ENCODE measurements at regions of chr6 and their contacts with region 1.

Region 1: DNA sequence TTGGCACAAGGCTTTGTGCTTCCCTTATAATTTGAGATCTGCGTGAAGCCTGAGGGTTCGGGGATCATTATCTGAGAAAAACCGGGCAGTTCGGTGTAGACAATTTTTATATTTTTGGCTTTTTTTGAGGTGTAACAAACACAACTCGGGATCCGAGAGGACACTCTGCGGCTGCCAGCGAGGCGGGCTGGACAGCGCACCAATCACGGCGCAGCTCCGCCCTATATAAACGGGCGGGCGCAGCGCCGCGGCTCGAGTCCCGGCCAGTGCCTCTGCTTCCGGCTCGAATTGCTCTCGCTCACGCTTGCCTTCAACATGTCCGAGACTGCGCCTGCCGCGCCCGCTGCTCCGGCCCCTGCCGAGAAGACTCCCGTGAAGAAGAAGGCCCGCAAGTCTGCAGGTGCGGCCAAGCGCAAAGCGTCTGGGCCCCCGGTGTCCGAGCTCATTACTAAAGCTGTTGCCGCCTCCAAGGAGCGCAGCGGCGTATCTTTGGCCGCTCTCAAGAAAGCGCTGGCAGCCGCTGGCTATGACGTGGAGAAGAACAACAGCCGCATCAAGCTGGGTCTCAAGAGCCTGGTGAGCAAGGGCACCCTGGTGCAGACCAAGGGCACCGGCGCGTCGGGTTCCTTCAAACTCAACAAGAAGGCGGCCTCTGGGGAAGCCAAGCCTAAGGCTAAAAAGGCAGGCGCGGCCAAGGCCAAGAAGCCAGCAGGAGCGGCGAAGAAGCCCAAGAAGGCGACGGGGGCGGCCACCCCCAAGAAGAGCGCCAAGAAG is 69.0 kb downstream of the HFE start:
- DNase-seq: peak; percentile 74 to 91 (median 83)
- ATAC-seq: peak; percentile 41 to 65 (median 63)
- H3K4me3 ChIP-seq: peak overlapping the region; percentile 73 to 87
- H3K4me3 Mint-ChIP-seq: peak overlapping the region; percentile 91 to 98 (median 97)
- H3K27ac ChIP-seq: peak overlapping the region; percentile 90
- H3K27ac Mint-ChIP-seq: peak overlapping the region; percentile 94 to 98
- H3K4me1 ChIP-seq: peaks cover 15 to 31% of the 10 kb centered on the region in 2 experiments
- H3K4me1 Mint-ChIP-seq: peaks cover 28 to 60% (median 40%) of the 10 kb centered on the region in 3 donors
- H3K27me3 ChIP-seq: no peaks in the 10 kb centered on the region
- H3K27me3 Mint-ChIP-seq: no peaks in the 10 kb centered on the region

Region 2: DNA sequence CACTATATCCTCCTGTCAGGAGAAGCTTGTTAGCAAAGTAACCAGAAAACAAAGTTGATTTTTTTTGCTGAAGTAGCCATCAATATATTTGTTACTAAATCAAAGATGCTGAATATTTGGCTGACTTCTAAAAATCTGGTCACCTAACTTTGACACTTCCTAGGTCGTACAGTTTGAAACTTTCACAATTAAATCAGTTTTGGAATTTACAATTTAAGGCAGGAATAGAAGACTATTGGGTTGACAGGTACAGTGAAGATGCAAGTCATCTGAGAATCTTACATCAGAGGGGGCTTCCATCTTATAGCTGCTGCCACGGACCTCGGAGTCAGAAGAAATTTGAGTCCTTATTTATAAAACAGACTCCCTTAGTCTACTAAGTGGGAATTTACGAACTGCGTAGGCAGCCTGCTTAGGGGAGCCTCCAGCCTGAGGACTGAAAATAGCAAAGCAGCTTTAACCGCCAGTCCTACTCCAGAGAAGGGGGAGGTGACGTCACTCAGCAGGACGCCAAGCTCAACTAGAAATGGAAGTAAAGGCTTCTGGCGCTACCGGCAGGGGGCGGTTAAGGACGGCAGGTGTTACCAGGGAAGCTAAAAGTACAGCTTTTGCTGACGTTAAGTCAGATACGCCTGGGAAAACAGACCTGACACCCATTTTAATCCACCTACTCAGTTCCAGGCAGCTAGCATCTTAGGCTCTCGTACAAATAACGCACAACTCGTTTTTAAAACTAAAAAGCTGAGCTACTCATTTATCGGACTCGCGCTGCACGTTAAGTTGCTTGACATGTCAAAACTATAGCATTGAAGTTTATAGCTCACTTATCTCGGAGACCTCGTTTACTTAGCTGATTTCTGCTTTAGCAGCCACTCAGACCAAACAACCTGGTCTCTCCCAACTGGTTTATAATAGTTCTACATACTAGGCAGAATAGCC is 130.1 kb before region 1 on chr6:
- CTCF ChIA-PET with region 1: no interaction called
- POLR2A ChIA-PET with region 1: interaction called in 1 of 2 experiments, 23 read pairs
- DNase-seq: peak; percentile 70 to 98 (median 96)
- ATAC-seq: peak; percentile 33 to 46 (median 36)
- H3K4me3 ChIP-seq: peak overlapping the region; percentile 63 to 88
- H3K4me3 Mint-ChIP-seq: peak overlapping the region; percentile 82 to 93 (median 92)
- H3K27ac ChIP-seq: peak overlapping the region; percentile 93
- H3K27ac Mint-ChIP-seq: peak overlapping the region; percentile 93 to 99
- H3K4me1 ChIP-seq: peaks cover 22 to 24% of the 10 kb centered on the region in 2 experiments
- H3K4me1 Mint-ChIP-seq: peaks cover 43 to 53% (median 44%) of the 10 kb centered on the region in 3 donors
- H3K27me3 ChIP-seq: no peaks in the 10 kb centered on the region
- H3K27me3 Mint-ChIP-seq: peaks cover 0 to 2% of the 10 kb centered on the region in 2 donors

Region 3: DNA sequence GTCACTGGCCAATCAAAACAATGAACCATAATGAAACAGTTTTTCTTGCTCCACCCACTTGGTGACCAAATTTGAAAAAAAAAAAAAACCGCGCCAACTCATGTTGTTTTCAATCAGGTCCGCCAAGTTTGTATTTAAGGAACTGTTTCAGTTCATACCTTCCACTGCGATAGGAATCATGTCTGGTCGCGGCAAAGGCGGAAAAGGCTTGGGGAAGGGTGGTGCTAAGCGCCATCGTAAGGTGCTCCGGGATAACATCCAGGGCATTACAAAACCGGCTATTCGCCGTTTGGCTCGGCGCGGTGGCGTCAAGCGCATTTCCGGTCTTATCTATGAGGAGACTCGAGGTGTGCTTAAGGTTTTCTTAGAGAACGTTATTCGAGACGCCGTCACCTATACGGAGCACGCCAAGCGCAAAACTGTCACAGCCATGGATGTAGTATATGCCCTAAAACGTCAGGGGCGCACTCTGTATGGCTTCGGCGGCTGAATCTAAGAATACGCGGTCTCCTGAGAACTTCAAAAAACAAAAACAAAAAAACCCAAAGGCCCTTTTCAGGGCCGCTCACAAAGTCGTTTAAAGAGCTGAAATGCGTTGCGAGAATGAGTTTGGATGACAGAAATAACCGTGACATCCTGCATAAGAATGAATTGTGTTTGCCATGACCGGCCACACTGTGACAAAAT is 52.4 kb before region 1 on chr6:
- CTCF ChIA-PET with region 1: interaction called in 1 of 2 experiments, 3 read pairs
- POLR2A ChIA-PET with region 1: interaction called, 10 to 45 read pairs
- DNase-seq: peak; percentile 82 to 95 (median 89)
- ATAC-seq: peak; percentile 87 to 92 (median 90)
- H3K4me3 ChIP-seq: peak overlapping the region; percentile 40 to 68
- H3K4me3 Mint-ChIP-seq: peak overlapping the region; percentile 78 to 91 (median 89)
- H3K27ac ChIP-seq: peak overlapping the region; percentile 85
- H3K27ac Mint-ChIP-seq: peak overlapping the region; percentile 96 to 99
- H3K4me1 ChIP-seq: peaks cover 7 to 12% of the 10 kb centered on the region in 2 experiments
- H3K4me1 Mint-ChIP-seq: peaks cover 15 to 18% (median 16%) of the 10 kb centered on the region in 3 donors
- H3K27me3 ChIP-seq: peaks cover 0 to 4% of the 10 kb centered on the region in 2 experiments
- H3K27me3 Mint-ChIP-seq: peaks cover 0 to 3% of the 10 kb centered on the region in 2 donors

Region 4: DNA sequence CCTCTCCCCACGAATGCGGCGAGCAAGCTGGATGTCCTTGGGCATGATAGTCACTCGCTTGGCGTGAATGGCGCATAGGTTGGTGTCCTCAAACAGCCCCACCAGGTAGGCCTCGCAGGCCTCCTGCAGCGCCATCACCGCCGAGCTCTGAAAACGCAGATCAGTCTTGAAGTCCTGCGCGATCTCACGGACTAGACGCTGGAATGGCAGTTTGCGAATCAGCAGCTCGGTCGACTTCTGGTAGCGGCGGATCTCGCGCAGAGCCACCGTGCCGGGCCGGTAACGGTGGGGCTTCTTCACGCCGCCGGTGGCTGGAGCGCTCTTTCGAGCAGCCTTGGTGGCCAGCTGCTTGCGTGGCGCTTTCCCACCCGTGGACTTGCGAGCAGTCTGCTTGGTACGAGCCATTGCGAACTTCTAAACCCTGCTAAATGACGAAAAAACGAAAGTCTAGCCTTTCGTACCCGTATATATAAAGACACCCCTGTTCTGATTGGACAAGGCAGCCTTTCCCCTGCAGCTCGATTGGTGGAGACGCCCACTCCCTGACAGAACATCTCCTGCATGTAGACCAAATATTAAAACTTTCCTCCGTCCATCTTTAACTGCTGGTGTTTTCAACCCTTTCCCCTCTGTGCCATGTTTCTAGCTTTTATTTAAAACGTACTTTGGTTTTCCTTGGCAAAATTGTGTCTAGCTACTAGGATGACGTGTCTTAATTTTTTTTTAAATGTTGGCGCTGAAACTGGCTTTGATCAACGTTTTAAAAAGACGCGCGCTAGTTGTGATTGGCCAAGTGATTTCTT is 40.8 kb after region 1 on chr6:
- CTCF ChIA-PET with region 1: interaction called, 4 to 27 read pairs
- POLR2A ChIA-PET with region 1: interaction called, 92 to 311 read pairs
- DNase-seq: peak; percentile 55 to 93 (median 81)
- ATAC-seq: peak; percentile 58 to 66 (median 61)
- H3K4me3 ChIP-seq: peak overlapping the region; percentile 79 to 99
- H3K4me3 Mint-ChIP-seq: peak overlapping the region; percentile 95 to 98 (median 97)
- H3K27ac ChIP-seq: peak overlapping the region; percentile 85
- H3K27ac Mint-ChIP-seq: peak overlapping the region; percentile 93 to 98
- H3K4me1 ChIP-seq: peaks cover 13 to 30% of the 10 kb centered on the region in 2 experiments
- H3K4me1 Mint-ChIP-seq: peaks cover 38 to 60% (median 46%) of the 10 kb centered on the region in 3 donors
- H3K27me3 ChIP-seq: no peaks in the 10 kb centered on the region
- H3K27me3 Mint-ChIP-seq: no peaks in the 10 kb centered on the region

Region 5: DNA sequence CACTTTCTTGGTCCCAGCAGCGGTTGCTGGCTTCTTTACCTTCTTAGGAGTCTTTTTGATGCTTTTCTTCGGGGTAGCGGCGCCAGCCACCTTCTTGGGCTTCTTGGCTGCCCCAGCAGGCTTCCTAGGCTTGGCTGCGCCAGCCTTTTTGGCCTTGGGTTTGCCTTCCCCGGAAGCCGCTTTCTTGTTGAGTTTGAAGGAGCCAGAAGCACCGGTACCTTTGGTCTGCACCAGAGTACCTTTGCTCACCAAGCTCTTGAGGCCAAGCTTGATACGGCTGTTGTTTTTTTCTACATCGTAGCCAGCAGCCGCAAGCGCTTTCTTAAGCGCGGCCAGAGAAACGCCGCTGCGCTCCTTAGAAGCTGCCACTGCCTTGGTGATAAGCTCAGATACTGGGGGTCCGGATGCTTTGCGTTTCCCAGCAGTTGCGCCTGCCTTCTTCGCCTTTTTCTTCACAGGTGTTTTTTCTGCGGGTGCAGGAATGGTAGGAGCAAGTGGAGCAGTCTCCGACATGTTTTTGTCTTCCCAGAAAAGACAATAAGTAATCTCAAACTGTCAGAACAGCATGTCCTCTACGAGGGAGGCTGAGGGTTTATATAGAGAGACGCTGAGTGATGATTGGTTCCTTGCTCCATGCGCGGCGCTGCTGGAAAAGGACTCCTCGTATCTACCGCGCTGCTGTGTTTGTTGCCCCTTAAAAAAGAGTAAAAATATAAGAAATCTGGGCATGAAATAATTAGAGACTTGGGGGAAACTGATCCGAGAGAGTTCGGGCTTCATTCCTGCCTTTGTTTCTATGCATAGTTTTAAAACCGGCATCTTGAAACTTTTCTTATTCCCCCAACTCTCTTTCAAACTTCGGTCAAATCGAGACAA is 78.4 kb after region 1 on chr6:
- CTCF ChIA-PET with region 1: no interaction called
- POLR2A ChIA-PET with region 1: interaction called, 9 to 25 read pairs
- DNase-seq: peak; percentile 52 to 83 (median 66)
- ATAC-seq: peak; percentile 66 to 78 (median 76)
- H3K4me3 ChIP-seq: peak overlapping the region; percentile 88 to 98
- H3K4me3 Mint-ChIP-seq: peak overlapping the region; percentile 87 to 96 (median 88)
- H3K27ac ChIP-seq: peak overlapping the region; percentile 95
- H3K27ac Mint-ChIP-seq: peak overlapping the region; percentile 96 to 100
- H3K4me1 ChIP-seq: peaks cover 13 to 19% of the 10 kb centered on the region in 2 experiments
- H3K4me1 Mint-ChIP-seq: peaks cover 32 to 39% (median 36%) of the 10 kb centered on the region in 3 donors
- H3K27me3 ChIP-seq: no peaks in the 10 kb centered on the region
- H3K27me3 Mint-ChIP-seq: no peaks in the 10 kb centered on the region

Region 6: GRCh38 chr6:27132532-27133280 is 976.4 kb after region 1 on chr6:
- CTCF ChIA-PET with region 1: no interaction called
- POLR2A ChIA-PET with region 1: interaction called in 1 of 2 experiments, 17 read pairs
- DNase-seq: peak; percentile 76 to 98 (median 87)
- ATAC-seq: peak; percentile 80 to 87 (median 86)
- H3K4me3 ChIP-seq: peak overlapping the region; percentile 49 to 77
- H3K4me3 Mint-ChIP-seq: no peak overlapping the region
- H3K27ac ChIP-seq: peak overlapping the region; percentile 85
- H3K27ac Mint-ChIP-seq: no peak overlapping the region
- H3K4me1 ChIP-seq: peaks cover 17 to 34% of the 10 kb centered on the region in 2 experiments
- H3K4me1 Mint-ChIP-seq: peaks cover 22 to 30% (median 22%) of the 10 kb centered on the region in 3 donors
- H3K27me3 ChIP-seq: no peaks in the 10 kb centered on the region
- H3K27me3 Mint-ChIP-seq: no peaks in the 10 kb centered on the region

Region 7: DNA sequence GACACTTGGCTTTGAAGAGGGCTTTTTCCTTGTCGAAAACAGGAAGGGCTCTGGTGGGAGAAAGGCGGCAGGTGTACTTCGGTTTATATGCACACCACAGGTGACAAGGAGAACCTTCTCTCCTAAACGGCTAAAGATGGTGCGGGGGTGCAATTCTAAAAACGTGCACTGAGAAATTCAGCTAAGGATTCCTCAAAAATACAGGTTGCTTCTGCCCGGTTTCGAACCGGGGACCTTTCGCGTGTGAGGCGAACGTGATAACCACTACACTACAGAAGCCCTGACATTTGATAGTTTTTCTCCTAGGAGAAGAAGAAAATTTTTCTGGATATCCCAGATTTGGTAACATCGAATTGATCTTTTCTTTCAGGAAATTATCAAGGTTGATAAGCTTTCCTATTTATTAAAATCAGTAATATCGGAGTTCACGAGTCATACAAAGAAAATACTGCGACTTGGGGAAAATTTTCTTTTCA is 1123.8 kb after region 1 on chr6:
- CTCF ChIA-PET with region 1: no interaction called
- POLR2A ChIA-PET with region 1: no interaction called
- DNase-seq: peak in 1 of 35 experiments; percentile 30
- ATAC-seq: no peak
- H3K4me3 ChIP-seq: no peak overlapping the region
- H3K4me3 Mint-ChIP-seq: no peak overlapping the region
- H3K27ac ChIP-seq: no peak overlapping the region
- H3K27ac Mint-ChIP-seq: peak overlapping the region in 1 of 2 donors; percentile 71
- H3K4me1 ChIP-seq: peaks cover 0 to 9% of the 10 kb centered on the region in 2 experiments
- H3K4me1 Mint-ChIP-seq: peaks cover 0 to 7% (median 5%) of the 10 kb centered on the region in 3 donors
- H3K27me3 ChIP-seq: peaks cover 50 to 68% of the 10 kb centered on the region in 2 experiments
- H3K27me3 Mint-ChIP-seq: peaks cover 76 to 87% of the 10 kb centered on the region in 2 donors